ENCODE measurements at regions of chr2 and their contacts with region 1.

Region 1: GRCh38 chr2:158456309-158457066 is at the starts of genes CCDC148 and PKP4:
- DNase-seq: peak; percentile 86 to 96
- H3K4me3 ChIP-seq: peak within 1 kb of the TSS; percentile 65
- CTCF ChIP-seq: no peak
- POLR2A ChIP-seq: peak in 1 of 2 donors; percentile 28
- total RNA-seq, gene CCDC148: 0.55 to 1.6 TPM in 2 of 4 donors, not detected in the others
- total RNA-seq, gene PKP4: 28.0 to 71.0 (median 43.6) TPM

Region 2: DNA sequence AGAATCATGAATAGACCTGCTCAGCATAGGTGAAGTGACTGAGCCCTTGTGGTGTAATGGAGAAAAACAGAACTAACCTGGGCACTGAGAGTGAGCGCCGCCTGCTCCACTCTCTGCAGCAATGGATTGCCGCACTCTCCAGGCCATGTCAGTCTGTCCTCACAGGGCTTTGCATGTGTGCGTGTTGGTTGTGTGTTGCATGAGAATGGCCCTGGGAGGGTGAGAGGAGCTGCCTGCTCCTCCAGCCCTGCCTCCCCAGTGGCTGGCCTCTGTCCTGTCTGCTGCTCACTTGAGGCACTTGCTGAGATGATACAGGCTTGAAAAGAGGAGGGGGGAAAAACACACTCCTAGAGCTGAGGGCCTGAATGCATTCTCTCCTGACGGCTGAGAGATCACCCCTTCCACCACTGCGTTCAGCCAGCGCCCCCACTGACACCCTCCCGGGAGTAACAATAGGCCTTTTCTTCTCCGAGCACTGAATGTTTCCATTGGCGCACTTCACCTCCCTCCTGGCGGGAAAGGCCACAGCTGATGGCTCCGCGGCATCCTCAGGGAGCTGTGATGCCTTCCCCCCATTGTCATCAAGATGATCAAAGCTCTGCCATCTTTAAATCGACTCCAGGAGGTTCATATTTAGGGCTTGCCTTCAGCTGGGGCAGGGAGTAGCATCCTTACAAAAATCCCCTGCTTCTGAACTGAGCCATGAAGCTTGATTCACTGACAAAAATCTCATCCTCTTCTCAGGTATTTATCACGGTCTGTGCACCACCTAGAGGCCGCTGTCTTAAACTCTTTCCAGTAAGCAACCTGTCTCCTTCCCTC is 288.8 kb after region 1 on chr2:
- intact Hi-C with region 1: loop called (anchors 10 kb)
- DNase-seq: peak in 1 of 2 donors; percentile 82
- H3K4me3 ChIP-seq: no peak overlapping the region
- CTCF ChIP-seq: no peak
- POLR2A ChIP-seq: no peak

Measured in lower leg skin (tissue), 4 donors.